Caco-2 (cell line): ENCODE measurements at regions of chr13 and their contacts with region 1.

Region 1: DNA sequence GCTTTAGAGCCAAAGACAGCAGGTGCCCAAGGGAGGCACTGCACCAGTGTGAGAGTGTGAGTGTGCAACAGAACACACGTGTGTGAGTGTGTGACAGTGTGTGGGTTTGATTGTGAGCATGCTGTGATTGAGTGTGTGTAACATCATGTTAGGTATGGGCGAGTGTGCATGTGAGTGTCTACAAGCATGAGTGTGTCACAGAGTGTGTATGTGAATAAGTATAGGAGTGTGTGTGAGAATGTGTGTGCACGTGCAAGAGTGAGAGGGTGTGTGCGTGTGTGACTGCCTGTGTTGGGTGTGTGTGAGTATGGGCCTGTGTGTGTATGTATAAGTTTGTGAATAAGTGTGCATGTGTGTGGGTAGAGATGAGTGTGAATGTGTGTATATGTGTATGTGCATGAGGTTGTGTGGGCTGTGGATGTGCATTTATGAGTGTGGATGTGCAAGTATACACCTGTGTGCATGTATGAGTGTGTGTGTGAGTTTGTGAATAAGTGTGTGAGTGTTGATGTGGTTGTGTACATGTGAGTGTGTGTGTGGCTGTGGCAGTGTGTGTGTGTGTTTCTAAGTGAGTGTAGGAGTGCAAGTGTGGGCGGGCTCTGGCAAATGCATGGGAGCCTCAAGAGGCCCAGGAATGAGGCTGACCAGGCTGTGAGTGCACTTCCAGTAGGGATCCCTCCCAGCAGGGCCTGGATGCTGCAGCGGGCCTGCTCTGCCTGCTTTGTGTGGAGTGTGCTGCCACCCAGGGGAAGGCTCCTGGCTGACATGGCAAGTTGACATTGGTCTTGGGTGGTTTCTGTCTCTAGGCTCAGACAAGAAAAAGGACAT is 198.4 kb downstream of the COL4A1 start:
- DNase-seq: peak; percentile 82 to 84
- H3K4me3 ChIP-seq: no peak overlapping the region
- H3K4me3 Mint-ChIP-seq: no peak overlapping the region
- H3K27ac Mint-ChIP-seq: no peak overlapping the region
- H3K4me1 ChIP-seq: no peaks in the 10 kb centered on the region
- H3K4me1 Mint-ChIP-seq: peaks cover 6% of the 10 kb centered on the region
- H3K27me3 ChIP-seq: no peaks in the 10 kb centered on the region
- H3K27me3 Mint-ChIP-seq: no peaks in the 10 kb centered on the region
- CTCF ChIP-seq: peak; percentile 73 to 80

Region 2: GRCh38 chr13:108915634-108916512 is 1192.7 kb before region 1 on chr13:
- CTCF ChIA-PET with region 1: no interaction called
- POLR2A ChIA-PET with region 1: no interaction called
- intact Hi-C with region 1: loop called (anchors 5 kb)
- DNase-seq: peak; percentile 73 to 82
- H3K4me3 ChIP-seq: no peak overlapping the region
- H3K4me3 Mint-ChIP-seq: peak overlapping the region; percentile 25
- H3K27ac Mint-ChIP-seq: peak overlapping the region; percentile 53
- H3K4me1 ChIP-seq: peaks cover 11% of the 10 kb centered on the region
- H3K4me1 Mint-ChIP-seq: peaks cover 20% of the 10 kb centered on the region
- H3K27me3 ChIP-seq: no peaks in the 10 kb centered on the region
- H3K27me3 Mint-ChIP-seq: peaks cover 10% of the 10 kb centered on the region
- CTCF ChIP-seq: no peak

Region 3: GRCh38 chr13:108961542-108962125 is 1146.9 kb before region 1 on chr13:
- CTCF ChIA-PET with region 1: no interaction called
- POLR2A ChIA-PET with region 1: no interaction called
- intact Hi-C with region 1: loop called (anchors 1 kb)
- DNase-seq: peak in 1 of 2 experiments; percentile 48
- H3K4me3 ChIP-seq: no peak overlapping the region
- H3K4me3 Mint-ChIP-seq: no peak overlapping the region
- H3K27ac Mint-ChIP-seq: no peak overlapping the region
- H3K4me1 ChIP-seq: no peaks in the 10 kb centered on the region
- H3K4me1 Mint-ChIP-seq: peaks cover 15% of the 10 kb centered on the region
- H3K27me3 ChIP-seq: no peaks in the 10 kb centered on the region
- H3K27me3 Mint-ChIP-seq: no peaks in the 10 kb centered on the region
- CTCF ChIP-seq: peak; percentile 78 to 87

Region 4: DNA sequence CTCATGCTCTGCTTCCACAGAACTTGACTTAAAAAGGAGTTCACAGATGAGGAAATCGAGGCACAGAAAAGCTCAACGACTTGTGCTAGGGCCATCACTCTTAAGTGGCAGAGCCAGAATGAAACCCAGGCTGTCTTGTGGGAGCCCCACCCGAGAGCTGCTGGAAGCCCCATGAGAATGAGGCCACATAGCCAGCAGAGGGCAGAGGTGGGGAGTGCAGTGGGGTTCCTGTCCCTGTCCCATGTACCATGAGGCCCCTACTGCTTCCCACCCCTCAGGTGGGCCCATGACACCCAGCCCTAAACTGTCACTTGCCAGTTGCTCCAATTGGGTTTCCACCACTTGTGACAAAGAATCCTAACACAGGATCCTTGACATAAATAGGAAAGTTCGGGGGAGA is 498.0 kb before region 1 on chr13:
- CTCF ChIA-PET with region 1: no interaction called
- POLR2A ChIA-PET with region 1: no interaction called
- intact Hi-C with region 1: loop called (anchors 1 kb)
- DNase-seq: peak; percentile 47 to 50
- H3K4me3 ChIP-seq: no peak overlapping the region
- H3K4me3 Mint-ChIP-seq: no peak overlapping the region
- H3K27ac Mint-ChIP-seq: no peak overlapping the region
- H3K4me1 ChIP-seq: no peaks in the 10 kb centered on the region
- H3K4me1 Mint-ChIP-seq: no peaks in the 10 kb centered on the region
- H3K27me3 ChIP-seq: no peaks in the 10 kb centered on the region
- H3K27me3 Mint-ChIP-seq: no peaks in the 10 kb centered on the region
- CTCF ChIP-seq: peak; percentile 20 to 52

Region 5: DNA sequence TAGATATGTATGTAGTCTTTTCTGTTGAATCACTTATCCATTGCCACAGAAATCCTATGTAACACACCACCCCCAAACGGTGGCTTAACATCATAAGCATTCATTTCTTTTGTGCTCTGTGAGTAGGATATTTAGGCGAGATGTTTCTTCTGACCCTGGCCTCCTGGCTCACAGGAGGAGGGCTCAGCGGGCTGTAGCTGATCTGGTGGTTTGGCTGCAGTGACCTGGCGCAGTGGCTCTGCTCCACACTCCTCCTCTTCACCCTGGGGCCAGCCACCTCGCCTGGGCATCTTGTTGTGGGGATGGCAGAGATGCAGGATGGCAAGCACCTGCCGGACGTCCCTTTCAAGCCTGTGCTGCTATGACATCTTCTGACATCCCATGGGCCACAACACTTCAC is 175.1 kb before region 1 on chr13:
- CTCF ChIA-PET with region 1: no interaction called
- POLR2A ChIA-PET with region 1: no interaction called
- intact Hi-C with region 1: loop called (anchors 1 kb)
- DNase-seq: no peak
- H3K4me3 ChIP-seq: no peak overlapping the region
- H3K4me3 Mint-ChIP-seq: no peak overlapping the region
- H3K27ac Mint-ChIP-seq: no peak overlapping the region
- H3K4me1 ChIP-seq: no peaks in the 10 kb centered on the region
- H3K4me1 Mint-ChIP-seq: no peaks in the 10 kb centered on the region
- H3K27me3 ChIP-seq: no peaks in the 10 kb centered on the region
- H3K27me3 Mint-ChIP-seq: no peaks in the 10 kb centered on the region
- CTCF ChIP-seq: no peak

Region 6: GRCh38 chr13:110894097-110894496 is 785.5 kb after region 1 on chr13:
- CTCF ChIA-PET with region 1: no interaction called
- POLR2A ChIA-PET with region 1: no interaction called
- intact Hi-C with region 1: no loop called
- DNase-seq: no peak
- H3K4me3 ChIP-seq: no peak overlapping the region
- H3K4me3 Mint-ChIP-seq: no peak overlapping the region
- H3K27ac Mint-ChIP-seq: no peak overlapping the region
- H3K4me1 ChIP-seq: no peaks in the 10 kb centered on the region
- H3K4me1 Mint-ChIP-seq: no peaks in the 10 kb centered on the region
- H3K27me3 ChIP-seq: no peaks in the 10 kb centered on the region
- H3K27me3 Mint-ChIP-seq: no peaks in the 10 kb centered on the region
- CTCF ChIP-seq: no peak